ENCODE measurements at regions of chr17 and their contacts with region 1.

Region 1: GRCh38 chr17:409848-410545 is 57.4 kb upstream of the RPH3AL start:
- DNase-seq: peak; percentile 100
- ATAC-seq: peak; percentile 96

Region 2: DNA sequence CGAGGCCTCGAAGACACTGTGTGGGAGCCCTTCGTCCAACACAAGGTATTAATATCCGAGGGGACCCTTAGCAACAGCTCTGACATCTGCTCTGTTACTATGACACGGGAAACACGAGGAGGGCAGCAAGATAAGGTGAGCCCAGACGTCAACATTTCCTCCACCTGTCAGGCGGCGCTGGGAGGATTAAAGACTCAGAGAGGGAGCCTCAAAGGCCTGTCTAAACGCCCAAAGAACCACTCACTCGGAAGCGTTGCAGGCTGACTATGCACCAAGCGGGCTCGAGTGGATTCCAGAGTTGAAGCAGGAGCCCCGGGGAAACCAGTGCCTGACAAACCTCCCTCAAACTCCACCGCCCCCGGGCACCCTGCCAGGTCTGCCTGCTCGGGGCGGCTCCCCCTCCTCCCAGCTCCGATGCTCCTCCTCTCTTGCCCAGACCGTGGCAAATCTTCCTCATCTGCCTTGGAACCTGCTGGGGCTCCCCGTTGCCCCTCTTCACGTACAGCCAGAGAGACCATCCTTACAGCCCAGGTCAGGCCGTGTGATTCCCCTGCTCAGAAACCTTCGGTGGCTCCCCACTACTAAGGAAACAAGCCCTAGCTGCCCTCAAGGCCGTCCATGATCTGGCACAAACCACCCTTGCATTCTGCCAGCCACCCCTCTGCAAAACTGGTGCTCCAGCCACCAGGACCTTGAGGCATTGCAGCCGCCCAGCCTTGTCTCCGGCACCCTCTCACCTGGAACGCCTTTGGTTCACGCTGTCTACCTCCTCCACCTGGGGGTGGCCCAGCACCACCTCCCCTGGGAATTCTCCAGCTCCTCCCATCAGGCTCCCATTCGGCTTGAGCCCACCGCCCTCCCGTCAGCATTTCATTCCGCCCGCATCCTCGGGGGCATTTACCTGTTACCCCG is 73.6 kb before region 1 on chr17:
- intact Hi-C with region 1: no loop called
- DNase-seq: no peak
- ATAC-seq: no peak

Region 3: DNA sequence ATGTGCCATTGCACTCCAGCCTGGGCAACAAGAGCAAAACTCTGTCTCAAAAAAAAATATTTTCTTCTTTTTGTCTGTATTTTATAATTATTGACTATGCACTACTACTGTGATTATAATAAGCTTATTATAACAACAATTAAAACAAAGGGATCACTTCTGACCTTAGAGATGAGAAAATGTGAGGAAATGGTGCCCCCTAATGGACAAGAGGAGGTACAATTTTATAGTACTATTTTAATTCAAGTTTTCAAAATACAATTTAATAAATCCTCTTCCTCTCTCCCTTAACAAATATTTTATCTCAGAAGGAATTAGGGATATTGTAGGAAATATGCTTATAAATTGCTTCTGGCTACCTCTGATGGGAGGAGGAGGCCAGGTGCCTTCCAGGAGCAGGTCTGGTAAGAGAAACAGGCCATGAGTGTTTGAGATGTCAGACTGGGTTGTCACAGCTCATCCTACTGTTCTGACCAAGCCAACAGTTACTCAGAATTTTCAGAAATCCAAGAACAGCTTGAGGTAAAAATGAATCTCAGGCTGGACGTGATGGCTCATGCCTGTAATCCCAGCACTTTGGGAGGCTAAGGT is 290.6 kb after region 1 on chr17:
- intact Hi-C with region 1: loop called (anchors 2 kb)
- DNase-seq: no peak
- ATAC-seq: no peak

Measured in Right ventricle myocardium inferior (tissue), 1 donor.